Left ventricle myocardium superior (tissue), 1 donor: ENCODE measurements at regions of chr13 and their contacts with region 1.

Region 1: DNA sequence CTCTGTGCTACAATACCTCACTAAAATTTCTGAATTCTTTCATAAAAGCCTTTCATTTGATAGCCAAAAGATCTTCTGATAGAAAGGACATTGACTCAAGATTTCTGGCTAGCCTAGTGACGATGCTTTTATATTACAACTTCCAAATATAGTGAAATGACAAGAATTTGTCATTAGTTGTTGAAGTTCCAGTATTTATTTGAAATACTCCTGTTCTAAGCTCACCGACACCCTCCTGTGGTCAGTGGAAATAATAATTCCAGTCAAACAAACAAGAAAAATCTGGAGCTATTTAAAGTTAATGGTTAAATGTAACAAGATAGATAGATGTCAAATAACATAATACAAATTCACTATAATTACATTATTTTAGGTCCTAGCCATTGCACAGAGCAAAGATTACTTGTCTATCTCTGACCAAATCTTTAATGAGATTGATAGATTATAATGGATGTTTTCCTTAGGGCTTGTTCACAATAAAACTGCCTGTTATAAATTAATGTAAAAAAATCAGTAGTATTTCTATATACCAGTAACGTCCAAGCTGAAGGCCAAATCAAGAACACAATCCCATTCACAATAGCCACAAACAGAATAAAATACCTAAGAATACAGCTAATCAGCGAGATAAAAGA is 195.5 kb downstream of the RGCC start:
- DNase-seq: no peak
- ATAC-seq: peak; percentile 34

Region 2: DNA sequence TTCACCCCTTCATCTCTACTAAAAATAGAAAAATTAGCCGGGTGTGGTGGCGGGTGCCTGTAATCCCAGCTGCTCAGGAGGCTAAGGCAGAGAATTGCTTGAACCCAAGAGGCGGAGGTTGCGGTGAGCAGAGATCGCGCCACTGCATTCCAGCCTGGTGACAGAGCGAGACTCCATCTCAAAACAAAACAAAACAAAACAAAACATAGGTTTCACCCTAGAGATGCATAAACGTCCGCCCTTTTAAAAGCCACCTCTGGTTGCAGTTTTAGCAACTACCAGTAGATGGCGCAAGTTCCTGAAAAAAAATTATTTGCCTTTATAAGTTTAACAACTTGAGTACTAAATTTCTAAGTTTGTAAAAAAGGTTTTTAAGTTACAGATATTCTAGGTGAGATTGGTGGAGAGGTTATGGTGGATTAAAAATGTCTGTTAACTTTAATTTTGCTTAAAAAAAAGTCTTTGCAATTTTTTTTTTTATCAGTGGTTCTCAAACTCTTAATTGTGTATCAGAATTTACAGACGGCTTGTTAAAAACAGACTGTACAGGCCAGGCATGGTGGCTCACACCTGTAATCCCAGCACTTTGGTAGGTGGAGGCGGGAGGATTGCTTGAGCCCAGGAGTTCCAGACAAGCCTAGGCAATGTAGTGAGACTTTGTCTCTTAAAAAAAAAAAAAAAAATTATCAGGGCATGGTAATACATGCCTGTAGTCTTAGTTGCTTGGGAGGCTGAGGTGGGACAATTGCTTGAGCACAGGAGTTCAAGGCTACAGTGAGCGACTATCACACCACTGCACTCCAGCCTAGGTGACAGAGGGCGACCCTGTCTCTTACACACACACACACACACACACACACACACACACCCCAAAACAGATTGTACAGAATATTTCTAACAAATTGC is 299.7 kb before region 1 on chr13:
- intact Hi-C with region 1: loop called (anchors 10 kb)
- DNase-seq: no peak
- ATAC-seq: peak; percentile 42

Region 3: GRCh38 chr13:41456768-41457588 is 195.9 kb before region 1 on chr13 and contains the start of gene RGCC:
- intact Hi-C with region 1: loop called (anchors 5 kb)
- DNase-seq: peak; percentile 88
- ATAC-seq: peak; percentile 93
- total RNA-seq, gene RGCC: 40.2 TPM